ENCODE measurements at regions of chr17 and their contacts with region 1.

Region 1: GRCh38 chr17:7825206-7825990 is 8.6 kb upstream of the KDM6B start:
- DNase-seq: peak in 1 of 3 donors; percentile 15
- H3K4me3 ChIP-seq: no peak overlapping the region
- H3K27ac ChIP-seq: no peak overlapping the region
- H3K4me1 ChIP-seq: no peaks in the 10 kb centered on the region
- H3K27me3 ChIP-seq: peaks cover 0 to 2% (median 0%) of the 10 kb centered on the region in 5 experiments

Region 2: GRCh38 chr17:7306911-7307686 is 518.3 kb before region 1 on chr17 and contains the start of gene EIF5A:
- CTCF ChIA-PET with region 1: no interaction called
- POLR2A ChIA-PET with region 1: no interaction called
- DNase-seq: peak; percentile 100
- H3K4me3 ChIP-seq: peak within 1 kb of the TSS; percentile 67 to 99 (median 87)
- H3K27ac ChIP-seq: peak within 1 kb of the TSS; percentile 85 to 96
- H3K4me1 ChIP-seq: peaks cover 9 to 27% (median 20%) of the 10 kb centered on the region in 4 experiments
- H3K27me3 ChIP-seq: no peaks in the 10 kb centered on the region

Region 3: DNA sequence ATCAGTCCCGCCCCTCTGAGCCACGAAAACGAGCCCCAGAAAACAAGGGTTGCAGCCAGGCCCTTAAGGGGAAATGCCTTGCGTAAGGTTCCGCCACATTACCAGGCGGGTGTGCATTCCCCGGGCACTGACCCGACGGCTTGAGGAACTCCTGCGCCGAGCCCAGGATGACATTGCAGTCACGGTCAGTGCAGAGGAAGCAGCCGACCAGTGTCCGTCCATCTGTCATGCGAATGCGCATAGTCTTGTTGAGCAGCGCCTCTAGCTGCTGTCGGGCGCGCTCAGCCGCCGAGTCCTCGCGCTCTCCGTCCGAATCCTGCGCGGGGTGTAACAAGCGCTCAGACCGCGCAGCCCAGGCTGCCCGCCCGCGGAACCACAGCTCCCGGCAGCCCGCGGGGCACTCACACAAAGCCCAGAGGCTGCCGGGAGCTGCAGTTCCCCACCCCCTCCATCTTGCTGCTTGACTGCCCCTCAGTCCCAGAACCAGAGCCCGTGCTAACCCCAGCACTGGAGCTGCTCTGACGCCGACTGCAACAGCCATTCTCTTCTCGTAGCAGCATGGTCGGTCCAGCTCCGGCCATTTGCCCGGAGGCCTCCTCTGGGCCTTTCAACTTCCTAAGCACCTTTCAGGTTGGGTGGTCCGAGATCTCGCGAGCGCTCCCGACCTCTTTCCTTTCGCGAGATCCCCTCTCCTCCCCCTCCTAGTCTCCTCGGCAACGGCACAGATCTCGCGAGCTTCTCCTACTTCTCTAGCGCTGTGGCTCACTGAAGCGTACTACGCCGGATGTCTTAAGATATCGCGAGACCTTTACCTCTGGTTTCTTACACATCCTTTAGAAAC is 31.7 kb after region 1 on chr17 and contains the start of gene NAA38:
- CTCF ChIA-PET with region 1: interaction called, 10 read pairs
- POLR2A ChIA-PET with region 1: interaction called, 3 read pairs
- DNase-seq: peak; percentile 99 to 100 (median 100)
- H3K4me3 ChIP-seq: peak within 1 kb of the TSS; percentile 56 to 93 (median 86)
- H3K27ac ChIP-seq: peak within 1 kb of the TSS; percentile 88 to 93
- H3K4me1 ChIP-seq: peaks cover 5 to 42% (median 38%) of the 10 kb centered on the region in 4 experiments
- H3K27me3 ChIP-seq: no peaks in the 10 kb centered on the region